H1 (cell line): ENCODE measurements at regions of chr22 and their contacts with region 1.

Region 1: DNA sequence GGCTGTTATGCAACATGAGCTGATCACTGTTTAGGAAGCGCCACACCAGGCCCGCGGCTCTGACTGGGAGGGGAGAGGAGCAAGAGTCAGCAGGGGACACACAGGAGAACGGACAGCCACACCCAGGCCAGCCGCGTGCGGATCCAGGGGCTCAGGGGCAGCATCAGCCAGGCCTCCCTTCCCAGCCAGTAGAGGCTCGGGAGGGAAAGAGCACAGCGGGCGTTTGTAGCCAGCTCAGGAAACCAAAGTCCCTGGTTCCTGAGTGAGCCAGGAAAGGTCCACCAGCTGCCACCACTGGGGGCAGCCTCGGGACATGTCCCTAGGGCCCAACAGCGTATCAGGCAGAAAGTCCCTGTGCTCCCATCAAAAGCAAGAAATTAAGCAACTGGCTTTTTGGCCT is 71.8 kb upstream of the PITPNB start:
- DNase-seq: peak; percentile 61 to 83
- H3K4me3 ChIP-seq: no peak overlapping the region
- H3K27ac ChIP-seq: no peak overlapping the region
- H3K4me1 ChIP-seq: peaks cover 0 to 22% (median 18%) of the 10 kb centered on the region in 4 experiments; a peak in 6 of 7 replicates
- H3K27me3 ChIP-seq: peaks cover 0 to 2% (median 0%) of the 10 kb centered on the region in 4 experiments; a peak in 2 of 7 replicates
- CTCF ChIP-seq: peak; percentile 77 to 88 (median 87)
- EP300 ChIP-seq: 0 out of 3 replicates have a peak, but pooled peaks of 1 of the 2 experiments have one; percentile 51
- POLR2A ChIP-seq: no peak
- RAD21 ChIP-seq: peak; percentile 59 to 68

Region 2: DNA sequence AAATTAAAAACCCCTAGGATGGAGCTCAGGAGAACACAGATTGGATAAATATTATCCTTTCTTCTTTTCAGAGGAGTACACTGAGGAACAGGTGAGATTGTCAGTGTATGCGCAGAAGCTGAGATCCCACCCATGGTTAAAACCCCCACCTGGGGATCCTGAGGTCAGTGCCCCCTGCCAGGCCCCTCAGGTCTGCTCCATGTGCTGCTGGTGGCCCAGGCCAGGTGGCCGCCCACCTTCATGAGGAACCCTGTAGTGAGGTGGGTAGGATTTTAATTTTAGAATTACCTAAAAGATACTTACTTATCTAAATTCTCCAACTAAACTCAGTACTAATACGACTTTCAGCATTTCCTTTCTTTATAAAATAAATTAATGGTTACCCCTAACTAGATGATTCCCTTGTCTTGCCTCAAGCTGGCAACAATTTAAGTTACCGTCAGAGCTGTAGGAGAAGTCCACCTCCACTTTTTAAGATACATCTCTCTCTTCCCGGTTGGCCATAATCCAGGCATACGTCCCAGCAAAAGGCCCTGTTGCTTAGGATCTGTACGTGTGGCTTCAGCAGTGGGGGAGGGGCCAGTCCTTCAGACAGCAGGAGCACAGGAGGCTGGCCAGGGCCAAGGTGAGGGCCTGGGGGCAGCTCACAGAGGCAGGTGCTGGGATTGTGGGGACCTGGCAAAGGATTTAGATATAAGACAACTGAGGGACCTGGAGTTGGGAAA is 10.3 kb before region 1 on chr22:
- CTCF ChIA-PET with region 1: interaction called, 12 read pairs
- POLR2A ChIA-PET with region 1: interaction called, 3 read pairs
- DNase-seq: peak in 1 of 2 experiments; percentile 70
- H3K4me3 ChIP-seq: no peak overlapping the region
- H3K27ac ChIP-seq: no peak overlapping the region
- H3K4me1 ChIP-seq: peaks cover 0 to 6% (median 5%) of the 10 kb centered on the region in 4 experiments; a peak in 5 of 7 replicates
- H3K27me3 ChIP-seq: no peaks in the 10 kb centered on the region
- CTCF ChIP-seq: no peak
- EP300 ChIP-seq: no peak
- POLR2A ChIP-seq: no peak
- RAD21 ChIP-seq: no peak